MCF 10A (cell line): ENCODE measurements at regions of chr19 and their contacts with region 1.

Region 1: DNA sequence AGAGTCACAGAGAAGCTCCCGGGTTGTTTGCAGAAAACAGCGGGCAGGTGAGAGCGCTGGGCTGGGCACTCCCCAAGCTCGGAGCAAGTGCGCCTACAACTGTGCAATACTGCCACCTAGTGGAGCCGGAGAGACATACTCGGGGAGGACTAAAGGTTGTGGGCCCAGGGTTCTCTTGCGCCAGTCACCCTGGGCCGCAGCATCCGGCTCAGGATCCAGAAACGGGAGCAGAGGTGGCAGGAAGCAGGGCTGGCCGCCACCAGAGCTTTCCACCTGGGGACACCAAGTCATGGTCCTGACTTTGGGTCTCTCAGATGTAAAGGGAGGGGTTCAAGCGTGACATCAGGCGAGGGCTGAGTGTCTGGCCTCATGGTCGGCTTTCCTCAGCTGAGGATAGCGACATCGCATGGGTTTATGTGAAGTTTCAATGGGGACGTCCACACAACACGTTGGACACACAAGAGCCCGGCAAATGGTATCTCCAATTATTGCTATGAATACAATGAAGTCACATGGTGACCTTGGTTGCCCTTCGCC is 11.2 kb upstream of the KLK4 start:
- DNase-seq: peak; percentile 83
- H3K4me3 Mint-ChIP-seq: no peak overlapping the region
- H3K27ac Mint-ChIP-seq: no peak overlapping the region
- H3K4me1 Mint-ChIP-seq: no peaks in the 10 kb centered on the region
- H3K27me3 Mint-ChIP-seq: peaks cover 25% of the 10 kb centered on the region
- CTCF ChIP-seq: peak; percentile 91

Region 2: GRCh38 chr19:50357178-50358100 is 564.9 kb before region 1 on chr19:
- CTCF ChIA-PET with region 1: no interaction called
- POLR2A ChIA-PET with region 1: no interaction called
- intact Hi-C with region 1: loop called (anchors 1 kb)
- DNase-seq: peak; percentile 61
- H3K4me3 Mint-ChIP-seq: peak overlapping the region; percentile 67
- H3K27ac Mint-ChIP-seq: no peak overlapping the region
- H3K4me1 Mint-ChIP-seq: no peaks in the 10 kb centered on the region
- H3K27me3 Mint-ChIP-seq: no peaks in the 10 kb centered on the region
- CTCF ChIP-seq: peak; percentile 87

Region 3: GRCh38 chr19:50537762-50538230 is 384.6 kb before region 1 on chr19:
- CTCF ChIA-PET with region 1: interaction called, 20 read pairs
- POLR2A ChIA-PET with region 1: no interaction called
- intact Hi-C with region 1: loop called (anchors 5 kb)
- DNase-seq: peak; percentile 73
- H3K4me3 Mint-ChIP-seq: no peak overlapping the region
- H3K27ac Mint-ChIP-seq: no peak overlapping the region
- H3K4me1 Mint-ChIP-seq: no peaks in the 10 kb centered on the region
- H3K27me3 Mint-ChIP-seq: no peaks in the 10 kb centered on the region
- CTCF ChIP-seq: peak; percentile 72

Region 4: DNA sequence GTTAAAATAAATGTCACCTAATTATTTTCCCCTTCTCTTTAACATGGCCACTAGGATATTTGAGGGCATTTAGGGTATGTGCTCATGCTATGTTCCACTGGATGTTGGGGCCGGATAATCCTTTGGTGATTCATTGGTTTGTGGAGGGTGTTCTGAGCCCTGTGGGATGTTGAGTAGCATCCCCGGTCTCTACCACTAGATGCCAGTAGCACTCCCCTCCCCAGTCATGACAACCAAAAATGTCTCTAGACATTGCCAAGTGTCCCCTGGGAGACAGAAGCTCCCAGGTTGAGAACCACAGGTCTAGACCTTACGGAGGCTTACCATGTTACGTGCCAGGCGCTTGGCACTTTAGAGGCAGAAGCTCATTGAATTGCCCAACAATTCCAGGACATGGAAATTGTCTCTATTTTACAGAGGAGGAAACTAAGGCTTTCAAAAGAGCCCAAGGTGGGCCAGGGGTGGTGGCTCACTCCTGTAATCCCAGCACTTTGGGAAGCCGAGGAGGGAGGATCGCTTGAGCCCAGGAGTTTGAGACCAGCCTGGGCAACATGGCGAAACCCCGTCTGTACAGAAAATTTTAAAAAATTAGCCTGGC is 216.9 kb before region 1 on chr19:
- CTCF ChIA-PET with region 1: interaction called, 4 read pairs
- POLR2A ChIA-PET with region 1: no interaction called
- intact Hi-C with region 1: loop called (anchors 2 kb)
- DNase-seq: peak; percentile 61
- H3K4me3 Mint-ChIP-seq: no peak overlapping the region
- H3K27ac Mint-ChIP-seq: no peak overlapping the region
- H3K4me1 Mint-ChIP-seq: peaks cover 5% of the 10 kb centered on the region
- H3K27me3 Mint-ChIP-seq: peaks cover 26% of the 10 kb centered on the region
- CTCF ChIP-seq: peak; percentile 53

Region 5: GRCh38 chr19:50794439-50795237 is 127.7 kb before region 1 on chr19:
- CTCF ChIA-PET with region 1: interaction called, 14 read pairs
- POLR2A ChIA-PET with region 1: interaction called, 3 read pairs
- intact Hi-C with region 1: loop called (anchors 1 kb)
- DNase-seq: peak; percentile 57
- H3K4me3 Mint-ChIP-seq: no peak overlapping the region
- H3K27ac Mint-ChIP-seq: no peak overlapping the region
- H3K4me1 Mint-ChIP-seq: no peaks in the 10 kb centered on the region
- H3K27me3 Mint-ChIP-seq: no peaks in the 10 kb centered on the region
- CTCF ChIP-seq: peak; percentile 7

Region 6: DNA sequence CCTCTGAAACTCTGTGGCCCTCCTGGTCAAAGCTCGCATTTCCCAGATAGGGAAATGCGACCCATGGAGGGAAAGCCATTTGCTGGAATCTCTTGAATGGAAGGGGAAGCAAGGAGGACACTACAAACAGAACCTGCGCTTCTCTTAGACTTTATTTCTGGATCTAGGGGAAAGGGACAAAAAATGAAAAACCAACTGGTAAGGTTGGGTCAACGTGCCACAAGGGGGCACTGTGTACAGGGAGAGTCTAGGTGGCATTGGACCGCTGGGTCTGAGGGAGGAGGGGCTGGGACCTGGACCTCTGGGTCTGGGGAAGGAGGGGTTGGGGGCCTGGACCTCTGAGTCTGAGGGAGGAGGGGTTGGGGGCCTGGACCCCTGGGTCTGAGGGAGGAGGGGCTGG is 16.2 kb before region 1 on chr19:
- CTCF ChIA-PET with region 1: interaction called, 20 read pairs
- POLR2A ChIA-PET with region 1: interaction called, 3 read pairs
- intact Hi-C with region 1: loop called (anchors 1 kb)
- DNase-seq: peak; percentile 44
- H3K4me3 Mint-ChIP-seq: no peak overlapping the region
- H3K27ac Mint-ChIP-seq: no peak overlapping the region
- H3K4me1 Mint-ChIP-seq: no peaks in the 10 kb centered on the region
- H3K27me3 Mint-ChIP-seq: peaks cover 24% of the 10 kb centered on the region
- CTCF ChIP-seq: peak; percentile 35